ENCODE measurements at regions of chr1 and their contacts with region 1.

Region 1: GRCh38 chr1:241611063-241611462 is 29.1 kb downstream of the CHML start:
- DNase-seq: peak; percentile 71
- H3K4me3 Mint-ChIP-seq: no peak overlapping the region
- H3K27ac Mint-ChIP-seq: no peak overlapping the region
- H3K4me1 Mint-ChIP-seq: peaks cover 5% of the 10 kb centered on the region
- H3K27me3 Mint-ChIP-seq: no peaks in the 10 kb centered on the region

Region 2: DNA sequence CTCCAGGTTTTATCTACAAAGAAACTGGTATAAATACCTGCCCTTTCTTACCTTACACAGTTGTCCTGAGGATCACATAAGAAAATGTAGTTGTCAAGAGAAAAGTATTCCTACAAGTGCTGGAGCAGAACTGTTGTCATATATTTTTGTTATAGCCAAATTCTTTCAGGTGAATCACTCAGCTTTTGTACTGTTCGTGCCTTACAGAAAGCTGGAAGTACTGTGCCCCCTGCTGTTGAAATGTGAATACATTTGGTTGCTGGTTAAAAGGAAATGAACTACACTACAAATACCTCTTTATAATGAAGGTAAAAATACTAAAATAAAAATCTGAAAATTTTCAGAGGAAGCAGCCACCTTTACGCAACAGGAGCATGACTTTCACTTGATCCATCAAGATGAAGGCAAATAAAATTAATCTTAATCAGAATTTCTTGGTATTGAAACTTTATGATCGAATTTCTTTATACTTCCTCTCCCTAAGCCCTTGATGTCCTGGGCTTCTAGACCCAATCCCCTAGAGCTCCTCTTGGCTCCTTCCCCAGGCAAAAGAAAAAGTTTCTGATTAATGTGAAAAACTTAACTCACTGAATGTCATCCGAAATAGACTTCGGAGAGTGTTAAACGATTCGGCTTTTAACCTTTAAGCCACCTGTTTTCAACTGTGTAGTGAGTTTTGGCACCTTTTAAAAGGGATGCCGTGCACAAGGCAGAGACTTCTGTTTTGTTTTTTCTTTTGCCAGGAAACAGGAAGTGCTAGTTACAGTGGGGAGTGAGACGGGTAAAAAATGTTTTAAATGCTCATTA is 16.6 kb after region 1 on chr1:
- intact Hi-C with region 1: loop called (anchors 1 kb)
- DNase-seq: peak; percentile 85
- H3K4me3 Mint-ChIP-seq: peak overlapping the region; percentile 72
- H3K27ac Mint-ChIP-seq: peak overlapping the region; percentile 70
- H3K4me1 Mint-ChIP-seq: peaks cover 12% of the 10 kb centered on the region
- H3K27me3 Mint-ChIP-seq: no peaks in the 10 kb centered on the region

Region 3: DNA sequence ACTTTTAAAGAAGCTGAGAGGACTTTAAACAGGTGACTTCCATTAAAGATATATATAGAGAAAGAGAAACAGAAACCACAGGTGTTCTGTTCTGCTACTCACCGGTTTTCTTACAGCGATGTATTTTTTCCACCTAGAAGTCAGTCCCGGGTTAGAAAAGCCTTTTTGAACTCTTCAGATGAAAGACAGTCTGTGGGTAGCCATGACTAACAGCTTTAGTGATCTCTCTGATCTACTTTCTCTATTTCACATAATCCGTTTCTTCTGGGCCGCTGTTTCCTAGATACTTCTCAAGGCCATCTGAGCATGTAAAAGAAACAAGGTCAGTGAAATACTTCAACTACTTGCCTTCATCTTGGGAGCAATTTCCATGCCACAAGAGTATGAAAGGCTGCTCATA is 66.1 kb after region 1 on chr1:
- intact Hi-C with region 1: loop called (anchors 5 kb)
- DNase-seq: peak; percentile 84
- H3K4me3 Mint-ChIP-seq: peak overlapping the region; percentile 53
- H3K27ac Mint-ChIP-seq: peak overlapping the region; percentile 14
- H3K4me1 Mint-ChIP-seq: peaks cover 10% of the 10 kb centered on the region
- H3K27me3 Mint-ChIP-seq: peaks cover 14% of the 10 kb centered on the region

Region 4: GRCh38 chr1:241847796-241848685 is 237.0 kb after region 1 on chr1 and contains the start of gene EXO1:
- intact Hi-C with region 1: loop called (anchors 1 kb)
- DNase-seq: peak; percentile 97
- H3K4me3 Mint-ChIP-seq: peak within 1 kb of the TSS; percentile 94
- H3K27ac Mint-ChIP-seq: peak within 1 kb of the TSS; percentile 99
- H3K4me1 Mint-ChIP-seq: peaks cover 28% of the 10 kb centered on the region
- H3K27me3 Mint-ChIP-seq: peaks cover 1% of the 10 kb centered on the region
- total RNA-seq, gene EXO1: 60.9 and 63.5 TPM in 2 replicates

Region 5: DNA sequence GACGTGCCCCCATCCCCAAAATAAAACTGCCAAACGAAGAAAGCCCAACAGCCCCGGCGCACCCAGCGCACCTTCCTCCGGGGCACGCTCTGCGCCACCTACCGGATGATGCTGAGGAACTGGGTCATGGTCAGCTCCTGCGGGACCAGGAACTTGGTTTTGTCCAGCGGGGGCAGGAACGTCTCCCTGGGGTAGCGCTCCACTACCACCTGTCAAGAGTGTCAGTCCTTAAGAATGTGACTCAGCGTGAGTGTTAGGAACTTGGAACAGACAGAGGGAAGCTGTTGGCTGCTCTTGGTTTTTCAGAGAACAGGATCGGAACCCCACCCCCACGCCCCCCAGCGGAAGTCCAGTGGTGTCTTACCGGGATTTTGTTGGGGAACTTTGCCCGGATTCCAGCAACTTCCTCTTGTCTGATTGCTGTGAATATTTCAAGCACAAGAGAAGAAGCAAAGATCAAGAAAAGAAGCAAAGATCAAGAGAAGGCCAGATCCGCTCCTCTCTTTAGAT is 387.4 kb after region 1 on chr1:
- intact Hi-C with region 1: loop called (anchors 2 kb)
- DNase-seq: peak; percentile 84
- H3K4me3 Mint-ChIP-seq: peak overlapping the region; percentile 70
- H3K27ac Mint-ChIP-seq: no peak overlapping the region
- H3K4me1 Mint-ChIP-seq: peaks cover 6% of the 10 kb centered on the region
- H3K27me3 Mint-ChIP-seq: no peaks in the 10 kb centered on the region

Measured in activated CD4-positive, alpha-beta T cell treated with anti-CD3 and anti-CD28 coated beads, Interleukin-2, amount 10 ng/mL, durations not matched to agents 24 days and 14 days (primary cell).